Psoas muscle (tissue), 8 donors: ENCODE measurements at regions of chr15 and their contacts with region 1.

Region 1: GRCh38 chr15:83011271-83012075 is at the start of gene C15orf40:
- DNase-seq: peak; percentile 93 to 96
- ATAC-seq: peak; percentile 96 to 98 (median 96)
- H3K4me3 ChIP-seq: peak within 1 kb of the TSS; percentile 100
- H3K27ac ChIP-seq: peak within 1 kb of the TSS; percentile 92
- H3K4me1 ChIP-seq: peaks cover 23% of the 10 kb centered on the region
- H3K27me3 ChIP-seq: no peaks in the 10 kb centered on the region
- CTCF ChIP-seq: peak; percentile 65
- total RNA-seq, gene C15orf40: 6.3 to 11.4 (median 11.2) TPM

Region 2: GRCh38 chr15:82931221-82931620 is 80.3 kb before region 1 on chr15:
- intact Hi-C with region 1: no loop called
- DNase-seq: no peak
- ATAC-seq: peak in 1 of 4 donors; percentile 8
- H3K4me3 ChIP-seq: no peak overlapping the region
- H3K27ac ChIP-seq: peak overlapping the region; percentile 36
- H3K4me1 ChIP-seq: peaks cover 9% of the 10 kb centered on the region
- H3K27me3 ChIP-seq: no peaks in the 10 kb centered on the region
- CTCF ChIP-seq: no peak

Region 3: DNA sequence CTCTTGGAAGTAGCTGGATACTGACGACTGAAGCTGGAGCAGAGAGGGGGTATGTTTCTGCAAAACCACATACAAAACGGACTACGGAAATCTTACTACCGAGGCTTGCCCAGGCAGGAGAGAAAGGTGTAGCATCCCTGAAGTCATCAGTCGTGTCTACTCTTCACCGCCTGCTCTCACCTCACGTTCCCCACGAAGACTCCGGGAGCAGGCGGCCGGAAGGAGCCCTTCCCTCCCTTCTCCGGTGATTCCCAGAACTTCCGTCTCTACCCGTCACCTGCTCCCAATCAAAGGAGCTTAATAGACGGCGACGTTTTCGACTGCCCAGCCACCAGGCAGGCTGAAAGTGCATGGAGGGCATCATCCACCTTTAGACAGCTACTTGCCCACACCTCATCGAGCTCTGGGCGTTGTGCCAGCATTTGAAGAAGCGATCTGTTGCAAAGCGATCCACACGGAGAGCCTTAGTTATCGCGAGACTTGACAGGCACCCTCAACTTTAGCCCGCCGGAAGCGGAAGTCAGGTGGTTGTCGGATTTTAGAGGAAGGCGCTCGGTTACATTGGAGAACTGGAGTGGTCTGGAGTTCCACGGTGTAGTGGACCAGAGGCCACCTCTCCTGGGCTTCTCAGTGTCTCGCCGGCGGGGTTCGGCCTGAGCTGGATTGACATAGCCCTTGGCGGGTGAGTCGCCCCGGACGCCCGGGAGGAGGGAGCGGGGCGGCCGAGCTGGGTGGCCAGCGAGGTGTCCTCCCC is 25.6 kb before region 1 on chr15 and contains the start of gene RAMAC:
- intact Hi-C with region 1: loop called in 1 of 2 experiments (anchors 2 kb)
- DNase-seq: peak; percentile 91 to 96
- ATAC-seq: peak; percentile 96 to 99 (median 98)
- H3K4me3 ChIP-seq: peak within 1 kb of the TSS; percentile 71
- H3K27ac ChIP-seq: peak within 1 kb of the TSS; percentile 89
- H3K4me1 ChIP-seq: peaks cover 19% of the 10 kb centered on the region
- H3K27me3 ChIP-seq: no peaks in the 10 kb centered on the region
- CTCF ChIP-seq: no peak
- total RNA-seq, gene RAMAC: 17.0 to 21.8 (median 19.9) TPM

Region 4: DNA sequence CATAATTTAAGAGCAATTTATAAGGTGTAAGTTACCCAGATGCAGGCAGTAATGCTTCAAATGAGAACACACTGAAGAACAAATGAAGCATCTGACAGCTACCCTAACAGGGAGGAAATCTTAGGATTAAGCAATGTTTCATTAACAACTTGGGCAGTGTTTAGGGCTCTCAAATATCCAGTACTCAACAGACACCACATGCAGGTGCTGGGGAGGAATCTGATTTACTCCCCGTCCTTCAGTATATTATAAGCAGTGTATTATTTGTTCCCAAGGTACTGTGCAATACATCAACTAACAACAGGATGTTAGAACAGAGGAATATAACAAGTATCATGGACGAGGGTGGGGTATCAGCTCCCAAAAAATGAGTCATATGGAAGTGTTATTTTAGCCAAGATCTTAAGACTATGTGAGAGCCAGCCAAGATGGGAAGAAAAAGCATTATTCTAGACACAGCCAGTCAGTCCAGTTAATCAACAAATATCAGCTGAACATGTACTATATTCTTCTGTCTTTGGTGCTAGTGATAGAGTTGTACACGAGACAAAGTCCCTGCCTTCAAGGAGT is 35.2 kb after region 1 on chr15:
- intact Hi-C with region 1: no loop called
- DNase-seq: no peak
- ATAC-seq: peak; percentile 50 to 76 (median 64)
- H3K4me3 ChIP-seq: no peak overlapping the region
- H3K27ac ChIP-seq: peak overlapping the region; percentile 68
- H3K4me1 ChIP-seq: peaks cover 33% of the 10 kb centered on the region
- H3K27me3 ChIP-seq: no peaks in the 10 kb centered on the region
- CTCF ChIP-seq: no peak

Region 5: DNA sequence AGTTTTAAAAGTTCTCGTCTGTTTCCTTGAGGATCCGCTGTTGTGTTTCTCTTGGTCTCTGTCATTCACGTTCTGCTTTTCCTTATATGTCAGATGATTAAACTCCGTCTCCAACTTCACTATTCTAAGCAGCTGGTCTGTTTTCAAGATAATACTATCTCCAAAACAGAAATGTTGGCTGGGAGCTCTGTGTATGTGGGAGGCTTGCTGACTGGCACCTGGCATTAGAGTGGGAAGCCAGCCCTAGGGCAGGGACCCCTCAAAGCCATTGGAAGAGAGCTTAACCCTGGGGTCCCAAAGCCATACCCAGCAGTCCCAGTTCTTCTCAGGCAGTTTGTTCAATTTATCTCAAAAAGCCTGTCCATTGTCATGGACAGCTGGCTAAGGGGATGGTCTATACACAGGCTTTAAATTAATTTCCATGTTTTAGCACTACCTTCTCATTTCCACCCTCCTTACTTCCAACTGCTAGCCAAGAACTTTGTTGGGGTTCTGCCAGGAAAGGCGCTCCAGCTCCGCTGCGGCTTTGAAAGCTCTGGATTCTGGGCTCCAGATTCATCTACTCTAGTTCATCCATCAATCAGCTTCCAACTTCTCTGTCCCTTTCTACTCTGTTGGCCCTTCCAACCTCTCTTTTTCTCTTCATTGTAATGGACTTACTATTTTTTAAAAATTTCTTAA is 46.4 kb after region 1 on chr15:
- intact Hi-C with region 1: loop called in 1 of 2 experiments (anchors 5 kb)
- DNase-seq: peak in 1 of 2 donors; percentile 57
- ATAC-seq: peak in 3 of 4 donors; percentile 27 to 44 (median 36)
- H3K4me3 ChIP-seq: peak overlapping the region; percentile 16
- H3K27ac ChIP-seq: peak overlapping the region; percentile 72
- H3K4me1 ChIP-seq: peaks cover 73% of the 10 kb centered on the region
- H3K27me3 ChIP-seq: no peaks in the 10 kb centered on the region
- CTCF ChIP-seq: no peak

Region 6: DNA sequence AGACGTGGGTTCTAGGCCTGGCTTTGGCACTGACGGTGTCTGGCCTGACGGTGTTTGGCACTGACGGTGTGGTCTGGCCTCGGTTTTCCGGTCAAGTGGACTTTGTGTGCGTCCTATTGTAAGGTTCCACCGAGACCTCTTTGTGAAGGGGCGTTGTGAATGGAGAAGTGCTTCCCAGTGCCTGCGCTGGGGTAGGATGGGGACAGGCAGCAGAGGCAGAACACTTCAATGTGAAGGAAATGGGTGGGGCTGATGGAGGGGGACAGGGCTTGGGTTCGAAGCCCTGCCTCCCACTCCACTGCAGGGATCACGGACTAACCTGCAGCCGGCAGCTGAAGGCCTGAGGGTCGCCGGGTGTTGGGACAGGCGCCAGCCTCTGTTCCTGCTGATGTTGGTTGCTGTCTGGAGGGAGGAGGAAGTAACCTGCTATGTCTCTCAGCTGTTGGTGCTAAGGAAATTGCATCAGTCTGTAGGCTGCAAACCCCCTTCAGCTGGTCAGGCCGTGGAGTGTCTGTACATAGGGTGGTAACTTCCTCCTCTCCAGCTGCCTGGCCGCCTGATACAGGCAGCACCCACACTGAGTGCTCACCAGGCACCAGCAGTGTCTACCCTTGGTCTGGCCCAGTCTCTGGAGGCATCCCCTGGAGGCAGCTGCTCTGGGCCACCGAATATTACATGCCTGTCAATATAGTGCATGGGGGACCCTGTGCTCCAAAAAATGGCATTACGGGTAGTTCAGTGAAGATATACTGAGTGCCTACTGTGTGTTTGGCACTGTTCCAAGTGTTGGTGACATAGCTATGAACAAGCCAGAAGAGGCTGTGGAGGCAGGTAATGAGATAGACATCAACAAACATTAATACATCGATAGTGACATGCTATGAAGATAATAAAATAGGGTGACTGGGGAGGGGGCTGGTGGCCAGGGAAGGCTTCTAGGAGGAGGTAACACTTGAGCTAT is 97.1 kb after region 1 on chr15:
- intact Hi-C with region 1: loop called (anchors 1 to 5 kb)
- DNase-seq: peak; percentile 50 to 72
- ATAC-seq: peak; percentile 38 to 44 (median 40)
- H3K4me3 ChIP-seq: peak overlapping the region; percentile 90
- H3K27ac ChIP-seq: peak overlapping the region; percentile 85
- H3K4me1 ChIP-seq: peaks cover 14% of the 10 kb centered on the region
- H3K27me3 ChIP-seq: no peaks in the 10 kb centered on the region
- CTCF ChIP-seq: no peak

Region 7: DNA sequence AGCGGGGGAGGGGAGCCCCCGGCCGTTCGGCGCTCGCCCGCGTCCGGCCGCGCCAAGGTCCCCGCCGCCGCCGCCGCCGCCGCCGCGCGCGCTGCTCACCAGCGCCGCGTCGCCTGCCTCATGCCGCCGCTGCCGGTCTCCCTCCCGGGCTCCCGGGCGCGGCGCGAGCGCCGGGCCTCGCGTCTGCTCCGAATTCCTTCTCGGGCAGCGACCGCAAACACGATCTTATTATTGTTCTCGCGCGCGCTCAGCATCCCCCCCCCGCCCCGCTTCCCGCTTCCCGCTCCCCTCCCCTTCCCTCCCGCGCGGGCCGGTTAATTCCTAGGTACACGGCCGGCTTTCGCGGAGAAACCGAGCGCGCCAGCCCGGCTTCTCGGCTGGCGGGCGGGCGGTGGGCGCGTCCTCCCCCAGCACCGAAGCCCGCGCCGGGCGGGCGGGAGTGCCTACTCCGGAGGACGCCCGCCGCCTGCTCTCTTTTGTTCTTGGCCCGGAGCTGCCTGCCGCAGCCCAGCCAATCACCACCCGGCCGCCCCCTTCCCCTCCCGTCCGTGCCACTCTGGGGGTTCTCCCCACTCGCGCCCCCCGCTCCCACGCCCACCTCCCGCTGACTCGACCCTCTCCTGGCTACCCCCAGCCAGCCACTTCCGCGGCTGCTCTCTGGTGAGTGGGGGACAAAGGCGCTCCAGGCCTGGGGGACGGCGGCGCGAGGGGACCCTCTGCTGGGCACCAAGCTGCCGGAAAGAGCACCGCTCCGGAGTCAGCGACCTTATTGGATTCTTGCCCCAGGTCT is 196.3 kb after region 1 on chr15 and contains the start of gene HDGFL3:
- intact Hi-C with region 1: loop called in 1 of 2 experiments (anchors 5 kb)
- DNase-seq: peak; percentile 62 to 72
- ATAC-seq: peak in 3 of 4 donors; percentile 50 to 72 (median 58)
- H3K4me3 ChIP-seq: peak within 1 kb of the TSS; percentile 77
- H3K27ac ChIP-seq: peak within 1 kb of the TSS; percentile 65
- H3K4me1 ChIP-seq: peaks cover 7% of the 10 kb centered on the region
- H3K27me3 ChIP-seq: peaks cover 0 to 48% (median 9%) of the 10 kb centered on the region in 3 donors
- CTCF ChIP-seq: no peak
- total RNA-seq, gene HDGFL3: 4.8 to 10.4 (median 7.9) TPM